PC-9 (cell line): ENCODE measurements at regions of chr3 and their contacts with region 1.

Region 1: GRCh38 chr3:88988906-88989305 is 118.5 kb upstream of the EPHA3 start:
- DNase-seq: no peak
- H3K4me3 ChIP-seq: no peak overlapping the region
- H3K27ac ChIP-seq: no peak overlapping the region
- H3K4me1 ChIP-seq: no peaks in the 10 kb centered on the region
- H3K27me3 ChIP-seq: no peaks in the 10 kb centered on the region
- CTCF ChIP-seq: no peak

Region 2: DNA sequence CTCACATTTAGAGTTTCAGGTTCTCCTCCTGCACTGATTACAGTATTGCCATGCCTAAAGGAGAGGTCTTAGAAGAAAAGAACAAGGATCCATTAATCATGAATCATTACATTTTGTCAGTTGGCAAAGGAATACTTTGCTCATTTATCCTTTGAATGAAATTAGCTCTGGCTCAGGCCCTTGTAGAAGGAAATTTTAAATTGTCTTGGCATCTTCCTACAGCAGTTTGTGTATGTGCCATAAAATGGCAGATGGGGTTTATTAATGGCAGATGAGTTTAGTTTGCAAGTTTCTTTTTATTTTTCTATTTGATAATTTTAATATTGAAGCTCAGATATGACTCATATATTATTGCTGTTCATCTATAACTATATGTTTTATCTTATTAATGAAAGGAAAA is 62.7 kb before region 1 on chr3:
- CTCF ChIA-PET with region 1: no interaction called
- POLR2A ChIA-PET with region 1: no interaction called
- intact Hi-C with region 1: no loop called
- DNase-seq: no peak
- H3K4me3 ChIP-seq: no peak overlapping the region
- H3K27ac ChIP-seq: no peak overlapping the region
- H3K4me1 ChIP-seq: no peaks in the 10 kb centered on the region
- H3K27me3 ChIP-seq: no peaks in the 10 kb centered on the region
- CTCF ChIP-seq: no peak

Region 3: GRCh38 chr3:89059211-89059925 is 70.5 kb after region 1 on chr3:
- CTCF ChIA-PET with region 1: no interaction called
- POLR2A ChIA-PET with region 1: interaction called, 11 read pairs
- intact Hi-C with region 1: no loop called
- DNase-seq: no peak
- H3K4me3 ChIP-seq: no peak overlapping the region
- H3K27ac ChIP-seq: no peak overlapping the region
- H3K4me1 ChIP-seq: no peaks in the 10 kb centered on the region
- H3K27me3 ChIP-seq: no peaks in the 10 kb centered on the region
- CTCF ChIP-seq: no peak

Region 4: DNA sequence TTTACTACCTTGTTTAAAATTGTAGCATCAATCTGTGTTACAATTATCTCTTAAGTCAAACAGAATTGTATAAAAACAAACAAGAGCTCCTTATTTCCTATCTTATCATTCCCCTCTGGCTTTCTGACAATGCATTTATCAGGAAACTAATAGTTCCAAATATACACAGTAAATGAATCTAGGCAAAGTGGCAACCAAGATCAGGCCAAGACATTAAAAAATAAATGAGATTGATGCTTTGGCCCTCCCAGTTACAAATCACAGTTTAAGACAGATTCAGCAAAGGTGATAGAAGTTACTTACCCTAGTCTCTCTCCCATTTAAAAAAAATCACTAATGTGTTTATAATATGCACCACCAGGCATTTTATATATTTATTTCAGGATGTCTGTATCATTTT is 355.2 kb after region 1 on chr3:
- CTCF ChIA-PET with region 1: no interaction called
- POLR2A ChIA-PET with region 1: no interaction called
- intact Hi-C with region 1: no loop called
- DNase-seq: no peak
- H3K4me3 ChIP-seq: no peak overlapping the region
- H3K27ac ChIP-seq: no peak overlapping the region
- H3K4me1 ChIP-seq: no peaks in the 10 kb centered on the region
- H3K27me3 ChIP-seq: no peaks in the 10 kb centered on the region
- CTCF ChIP-seq: no peak